ENCODE measurements at regions of chr21 and their contacts with region 1.

Region 1: GRCh38 chr21:35616090-35616489 is 444.2 kb downstream of the SETD4 start:
- DNase-seq: no peak
- H3K4me3 Mint-ChIP-seq: no peak overlapping the region
- H3K27ac Mint-ChIP-seq: no peak overlapping the region
- H3K4me1 Mint-ChIP-seq: peaks cover 2% of the 10 kb centered on the region
- H3K27me3 Mint-ChIP-seq: peaks cover 5% of the 10 kb centered on the region

Region 2: DNA sequence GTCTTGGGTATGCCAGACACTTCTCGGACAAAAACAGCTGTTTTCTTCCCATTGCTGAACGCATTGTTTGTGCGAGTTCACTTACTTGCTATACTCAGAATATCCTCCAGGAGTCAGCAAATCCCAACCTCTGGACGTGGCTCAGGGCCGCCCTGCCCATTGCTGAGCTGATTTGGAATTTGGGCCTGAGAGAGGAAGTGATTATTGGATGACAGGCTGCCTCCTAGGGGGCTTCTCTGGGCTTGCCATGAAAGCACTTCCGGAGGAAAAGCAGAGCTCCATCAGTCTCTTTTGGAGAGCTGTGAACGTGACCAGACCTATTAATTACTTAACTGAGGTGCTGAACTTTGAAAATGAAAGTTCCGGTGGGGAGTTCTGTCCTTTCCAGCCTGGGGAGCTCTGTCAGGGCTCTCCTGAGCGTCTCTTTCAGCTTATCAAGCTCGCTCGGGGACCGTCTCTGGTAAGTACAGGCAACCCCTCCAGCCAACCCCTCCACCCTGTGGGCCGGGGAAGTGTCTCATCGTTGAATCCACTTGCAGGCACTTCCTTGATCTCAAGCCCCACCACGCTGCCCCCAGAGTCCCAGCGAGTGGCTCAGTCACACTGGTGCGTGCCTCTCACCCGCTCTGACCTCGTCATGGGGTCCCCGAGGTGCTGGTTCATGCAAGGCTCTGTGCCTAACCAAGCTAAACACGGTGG is 870.4 kb before region 1 on chr21:
- intact Hi-C with region 1: loop called (anchors 1 kb)
- DNase-seq: peak; percentile 87
- H3K4me3 Mint-ChIP-seq: peak overlapping the region; percentile 52
- H3K27ac Mint-ChIP-seq: no peak overlapping the region
- H3K4me1 Mint-ChIP-seq: peaks cover 3% of the 10 kb centered on the region
- H3K27me3 Mint-ChIP-seq: peaks cover 18% of the 10 kb centered on the region

Region 3: GRCh38 chr21:35658242-35658641 is 42.2 kb after region 1 on chr21:
- intact Hi-C with region 1: no loop called
- DNase-seq: peak; percentile 61
- H3K4me3 Mint-ChIP-seq: peak overlapping the region; percentile 27
- H3K27ac Mint-ChIP-seq: no peak overlapping the region
- H3K4me1 Mint-ChIP-seq: peaks cover 10% of the 10 kb centered on the region
- H3K27me3 Mint-ChIP-seq: peaks cover 16% of the 10 kb centered on the region